Calu3 (cell line): ENCODE measurements at regions of chr12 and their contacts with region 1.

Region 1: GRCh38 chr12:69570545-69571399 is 14.5 kb upstream of the CCT2 start:
- DNase-seq: peak; percentile 68
- H3K4me3 Mint-ChIP-seq: no peak overlapping the region
- H3K27ac Mint-ChIP-seq: no peak overlapping the region
- H3K4me1 Mint-ChIP-seq: peaks cover 14% of the 10 kb centered on the region
- H3K27me3 Mint-ChIP-seq: no peaks in the 10 kb centered on the region
- CTCF ChIP-seq: peak; percentile 57

Region 2: DNA sequence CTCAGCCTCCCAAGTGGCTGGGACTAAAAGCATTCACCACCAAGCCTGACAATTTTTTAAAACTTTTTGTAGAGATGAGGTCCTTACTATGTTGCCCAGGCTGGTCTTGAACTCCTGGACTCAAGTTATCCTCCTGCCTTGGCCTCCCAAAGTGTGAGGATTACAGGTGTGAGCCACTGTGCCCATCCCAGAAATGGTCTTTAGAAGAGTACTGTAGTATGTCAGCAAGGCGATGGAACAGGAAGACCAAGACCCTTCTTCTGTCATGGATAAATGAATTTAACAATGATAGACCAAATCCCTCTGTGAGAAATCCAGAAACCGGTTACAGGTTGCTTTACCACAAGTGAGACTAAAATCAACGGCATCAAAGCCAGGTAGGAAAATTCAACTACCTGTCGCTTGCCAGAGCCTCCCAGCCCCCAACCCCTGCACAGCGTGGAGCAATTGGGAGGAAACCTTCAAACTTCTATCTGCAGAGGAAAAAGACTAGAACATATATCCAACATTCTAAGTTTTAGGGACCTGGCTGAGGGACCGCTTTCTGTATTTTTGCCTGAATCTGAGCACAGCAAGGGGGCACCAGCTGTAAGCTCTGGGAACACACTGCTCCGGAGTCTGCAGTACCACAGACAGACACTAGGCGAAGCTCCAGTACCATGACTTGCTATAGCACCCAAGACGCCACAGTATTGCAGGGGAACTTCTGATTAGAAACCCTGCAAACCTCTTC is 280.1 kb before region 1 on chr12:
- CTCF ChIA-PET with region 1: interaction called, 11 read pairs
- intact Hi-C with region 1: loop called (anchors 2 kb)
- DNase-seq: peak; percentile 88
- H3K4me3 Mint-ChIP-seq: no peak overlapping the region
- H3K27ac Mint-ChIP-seq: no peak overlapping the region
- H3K4me1 Mint-ChIP-seq: peaks cover 11% of the 10 kb centered on the region
- H3K27me3 Mint-ChIP-seq: no peaks in the 10 kb centered on the region
- CTCF ChIP-seq: peak; percentile 99

Region 3: DNA sequence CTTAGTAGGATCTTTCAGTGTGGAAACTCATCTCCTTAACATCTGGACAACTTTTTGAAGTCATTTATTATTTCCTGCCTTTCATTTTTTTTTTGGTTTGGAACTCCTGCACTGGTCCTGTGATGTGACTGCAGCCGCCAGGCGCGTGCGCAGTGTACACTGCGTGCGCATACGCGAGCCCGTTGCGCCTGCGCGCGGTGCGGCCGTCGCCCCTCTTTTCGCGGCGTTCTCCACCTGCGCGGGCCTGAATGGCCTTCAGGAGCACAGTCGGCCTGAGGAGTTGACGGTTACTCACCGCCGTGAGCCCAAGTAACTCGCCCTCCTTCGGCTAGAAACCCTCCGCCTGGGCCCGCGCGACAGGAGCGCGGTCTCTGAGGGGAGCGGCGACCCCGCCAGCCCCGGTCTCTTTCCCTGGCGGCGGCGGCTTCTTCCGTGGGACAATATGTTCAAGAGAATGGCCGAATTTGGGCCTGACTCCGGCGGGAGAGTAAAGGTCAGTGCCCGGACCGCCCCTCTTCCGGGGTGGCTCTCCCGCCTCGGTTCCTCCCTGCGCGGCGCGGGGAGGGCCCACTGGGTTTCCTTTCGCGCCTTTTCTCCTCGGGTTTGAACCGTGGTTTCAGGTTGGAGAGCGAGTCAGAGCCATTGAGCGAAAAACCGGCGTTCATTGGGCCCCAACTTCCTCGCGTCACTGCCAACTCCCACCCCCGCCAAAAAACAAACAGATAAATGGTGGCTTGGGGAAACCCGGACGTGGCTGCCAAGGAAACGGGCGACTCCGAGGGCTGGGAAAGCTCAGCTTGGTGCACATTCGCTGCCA is 211.0 kb before region 1 on chr12 and contains the start of gene YEATS4:
- CTCF ChIA-PET with region 1: interaction called, 13 read pairs
- intact Hi-C with region 1: loop called (anchors 2 kb)
- DNase-seq: peak; percentile 93
- H3K4me3 Mint-ChIP-seq: peak within 1 kb of the TSS; percentile 79
- H3K27ac Mint-ChIP-seq: peak within 1 kb of the TSS; percentile 83
- H3K4me1 Mint-ChIP-seq: peaks cover 33% of the 10 kb centered on the region
- H3K27me3 Mint-ChIP-seq: no peaks in the 10 kb centered on the region
- CTCF ChIP-seq: no peak
- total RNA-seq, gene YEATS4: 34.9 and 38.9 TPM in 2 replicates

Region 4: GRCh38 chr12:69388371-69388770 is 182.4 kb before region 1 on chr12:
- CTCF ChIA-PET with region 1: interaction called, 4 read pairs
- intact Hi-C with region 1: loop called (anchors 1 kb)
- DNase-seq: no peak
- H3K4me3 Mint-ChIP-seq: no peak overlapping the region
- H3K27ac Mint-ChIP-seq: no peak overlapping the region
- H3K4me1 Mint-ChIP-seq: peaks cover 7% of the 10 kb centered on the region
- H3K27me3 Mint-ChIP-seq: no peaks in the 10 kb centered on the region
- CTCF ChIP-seq: peak; percentile 34

Region 5: GRCh38 chr12:69415471-69416275 is 155.1 kb before region 1 on chr12:
- CTCF ChIA-PET with region 1: interaction called, 3 read pairs
- intact Hi-C with region 1: loop called (anchors 1 kb)
- DNase-seq: peak; percentile 42
- H3K4me3 Mint-ChIP-seq: no peak overlapping the region
- H3K27ac Mint-ChIP-seq: no peak overlapping the region
- H3K4me1 Mint-ChIP-seq: peaks cover 19% of the 10 kb centered on the region
- H3K27me3 Mint-ChIP-seq: no peaks in the 10 kb centered on the region
- CTCF ChIP-seq: peak; percentile 80

Region 6: DNA sequence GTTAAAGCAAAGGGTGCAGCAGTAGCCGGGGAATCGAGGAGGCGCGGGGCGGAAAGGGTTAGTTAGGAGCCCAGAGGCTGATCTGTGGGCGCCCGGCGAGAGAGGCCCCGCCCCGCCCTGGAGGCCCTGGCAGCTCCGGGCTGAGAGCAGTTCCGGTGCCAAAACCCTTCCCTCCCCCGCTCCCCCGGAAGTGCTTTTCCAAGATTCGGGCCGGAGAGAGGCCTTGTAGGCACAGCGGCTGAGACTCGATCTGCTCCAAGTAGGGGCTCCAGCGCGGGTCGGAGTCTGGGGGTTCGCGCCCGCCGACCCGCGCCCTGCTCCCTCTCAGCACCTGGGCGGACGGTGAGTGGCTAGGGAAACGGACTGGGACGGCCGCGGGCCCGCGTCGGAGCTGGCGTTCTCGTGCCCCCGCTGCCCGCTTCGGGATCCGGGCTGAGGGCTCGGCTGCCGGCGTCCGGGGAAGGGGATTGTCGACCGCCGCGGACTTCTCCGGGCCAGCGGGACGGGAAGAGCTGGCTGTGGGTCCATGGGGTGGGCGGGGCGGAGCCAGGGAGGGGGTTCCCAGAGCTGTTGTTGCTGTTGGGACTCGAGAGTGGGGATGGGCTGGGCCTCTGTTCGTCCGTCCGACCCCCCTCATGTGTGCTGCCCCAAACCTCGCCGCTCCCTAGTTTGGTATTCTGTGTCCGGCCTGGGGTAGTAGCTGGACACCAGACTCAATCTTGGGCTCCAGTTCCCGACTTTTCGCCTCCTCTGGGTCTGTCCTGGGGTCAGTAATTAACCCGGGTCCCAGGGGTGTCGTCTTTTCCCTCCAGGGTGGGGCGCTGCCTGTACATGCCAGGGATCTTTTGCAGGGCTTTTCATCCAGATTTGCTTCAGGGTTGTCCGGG is 100.3 kb before region 1 on chr12 and contains the start of gene FRS2:
- CTCF ChIA-PET with region 1: interaction called, 8 read pairs
- intact Hi-C with region 1: loop called (anchors 1 kb)
- DNase-seq: peak; percentile 95
- H3K4me3 Mint-ChIP-seq: peak within 1 kb of the TSS; percentile 95
- H3K27ac Mint-ChIP-seq: peak within 1 kb of the TSS; percentile 81
- H3K4me1 Mint-ChIP-seq: peaks cover 62% of the 10 kb centered on the region
- H3K27me3 Mint-ChIP-seq: no peaks in the 10 kb centered on the region
- CTCF ChIP-seq: peak; percentile 34
- total RNA-seq, gene FRS2: 27.5 and 34.5 TPM in 2 replicates